MCF 10A (cell line): ENCODE measurements at regions of chr7 and their contacts with region 1.

Region 1: GRCh38 chr7:155729834-155730233 is 82.4 kb downstream of the SHH start:
- DNase-seq: peak; percentile 50
- H3K4me3 Mint-ChIP-seq: no peak overlapping the region
- H3K27ac Mint-ChIP-seq: peak overlapping the region; percentile 75
- H3K4me1 Mint-ChIP-seq: peaks cover 22% of the 10 kb centered on the region
- H3K27me3 Mint-ChIP-seq: no peaks in the 10 kb centered on the region
- CTCF ChIP-seq: no peak

Region 2: DNA sequence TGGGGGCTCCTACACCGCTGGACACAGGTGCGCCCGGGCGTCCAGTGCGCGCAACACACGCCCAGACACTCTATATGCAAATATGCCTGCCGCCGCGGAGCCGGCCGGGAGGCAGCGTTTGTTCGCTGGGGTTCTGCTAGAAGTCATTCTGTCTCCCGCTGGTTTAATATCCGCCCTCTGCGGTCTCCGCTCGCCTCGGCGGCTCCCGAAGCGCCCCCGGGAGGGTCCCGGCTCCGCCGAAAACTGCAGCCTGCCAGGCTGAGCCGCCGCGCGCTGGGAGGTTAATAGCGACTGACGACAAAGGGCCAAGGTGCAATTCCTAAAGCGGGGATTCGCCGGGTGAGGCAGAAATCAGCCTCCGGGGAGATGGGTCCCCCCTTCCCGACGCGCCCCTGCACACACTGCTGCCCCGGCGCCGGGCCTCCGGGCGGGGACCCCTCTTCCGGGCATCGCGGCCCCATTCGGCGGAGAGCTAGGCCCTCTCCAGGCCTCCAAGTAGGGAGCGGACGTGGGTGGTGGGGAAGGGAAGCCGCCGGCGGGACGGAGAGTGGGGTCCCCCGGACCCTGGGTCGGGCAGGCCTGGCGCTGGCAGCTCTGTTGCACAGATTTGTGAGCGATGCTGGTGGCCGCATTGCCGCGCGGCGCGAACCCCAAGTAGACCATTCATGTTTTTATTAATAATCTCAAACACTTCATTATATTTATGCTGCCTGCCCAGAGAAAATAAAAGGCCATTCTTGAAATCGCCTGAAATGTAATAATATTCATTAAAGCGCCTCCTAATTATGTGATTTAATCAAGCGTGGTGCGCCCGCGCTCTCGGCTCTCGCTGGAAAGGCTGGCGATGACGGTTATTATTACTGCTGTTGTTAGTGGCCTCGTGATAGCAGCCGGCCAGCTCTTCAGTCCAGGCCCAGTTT is 262.8 kb before region 1 on chr7:
- CTCF ChIA-PET with region 1: no interaction called
- POLR2A ChIA-PET with region 1: no interaction called
- intact Hi-C with region 1: no loop called
- DNase-seq: no peak
- H3K4me3 Mint-ChIP-seq: no peak overlapping the region
- H3K27ac Mint-ChIP-seq: no peak overlapping the region
- H3K4me1 Mint-ChIP-seq: no peaks in the 10 kb centered on the region
- H3K27me3 Mint-ChIP-seq: peaks cover 49% of the 10 kb centered on the region
- CTCF ChIP-seq: no peak

Region 3: GRCh38 chr7:155644178-155644970 is 85.5 kb before region 1 on chr7 and contains the start of gene RBM33:
- CTCF ChIA-PET with region 1: no interaction called
- POLR2A ChIA-PET with region 1: interaction called, 10 read pairs
- intact Hi-C with region 1: loop called (anchors 2 kb)
- DNase-seq: peak; percentile 81
- H3K4me3 Mint-ChIP-seq: peak within 1 kb of the TSS; percentile 78
- H3K27ac Mint-ChIP-seq: peak within 1 kb of the TSS; percentile 93
- H3K4me1 Mint-ChIP-seq: peaks cover 20% of the 10 kb centered on the region
- H3K27me3 Mint-ChIP-seq: no peaks in the 10 kb centered on the region
- CTCF ChIP-seq: no peak
- total RNA-seq, gene RBM33: 80.5 and 81.9 TPM in 2 replicates

Region 4: DNA sequence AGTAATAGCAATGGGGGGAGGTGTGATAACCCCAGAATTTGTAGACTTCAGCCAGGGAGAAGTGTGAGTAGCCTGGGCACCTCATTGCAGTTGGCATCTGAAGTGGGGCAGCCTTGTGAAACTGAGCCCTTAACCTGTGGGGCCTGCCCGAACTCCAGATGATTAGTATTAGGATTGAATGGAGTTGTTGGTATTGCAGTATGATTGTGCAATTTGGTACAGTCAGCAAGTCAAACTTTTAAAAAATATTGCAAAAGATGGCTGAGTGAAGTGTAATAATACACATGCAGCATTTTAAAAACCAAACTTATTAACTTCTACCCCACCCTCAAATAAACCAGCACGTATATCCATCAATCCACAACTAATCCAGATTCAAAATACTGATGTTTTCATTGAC is 76.0 kb before region 1 on chr7:
- CTCF ChIA-PET with region 1: no interaction called
- POLR2A ChIA-PET with region 1: no interaction called
- intact Hi-C with region 1: loop called (anchors 2 kb)
- DNase-seq: peak; percentile 87
- H3K4me3 Mint-ChIP-seq: no peak overlapping the region
- H3K27ac Mint-ChIP-seq: peak overlapping the region; percentile 50
- H3K4me1 Mint-ChIP-seq: peaks cover 30% of the 10 kb centered on the region
- H3K27me3 Mint-ChIP-seq: no peaks in the 10 kb centered on the region
- CTCF ChIP-seq: no peak

Region 5: DNA sequence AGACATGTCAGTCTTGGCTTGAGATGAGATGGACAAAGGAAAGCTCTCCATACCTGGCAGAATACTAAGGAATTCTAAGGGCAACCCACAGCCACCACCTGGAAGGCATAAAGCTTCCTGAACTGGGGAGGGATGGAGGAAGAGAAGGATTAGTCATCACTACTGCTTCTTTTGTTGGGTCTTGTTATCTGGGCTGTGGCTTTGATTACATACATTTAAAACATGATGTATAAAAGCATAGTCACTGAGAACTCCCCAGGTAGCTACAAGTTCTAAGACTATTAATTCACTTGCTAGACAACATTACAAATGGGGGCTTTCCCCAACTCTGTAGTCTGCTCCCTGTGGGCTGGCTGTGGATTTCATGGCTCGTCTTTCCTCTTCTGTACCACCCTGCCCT is 27.2 kb before region 1 on chr7:
- CTCF ChIA-PET with region 1: interaction called, 10 read pairs
- POLR2A ChIA-PET with region 1: interaction called, 4 read pairs
- intact Hi-C with region 1: no loop called
- DNase-seq: peak; percentile 57
- H3K4me3 Mint-ChIP-seq: no peak overlapping the region
- H3K27ac Mint-ChIP-seq: no peak overlapping the region
- H3K4me1 Mint-ChIP-seq: peaks cover 11% of the 10 kb centered on the region
- H3K27me3 Mint-ChIP-seq: no peaks in the 10 kb centered on the region
- CTCF ChIP-seq: no peak

Region 6: DNA sequence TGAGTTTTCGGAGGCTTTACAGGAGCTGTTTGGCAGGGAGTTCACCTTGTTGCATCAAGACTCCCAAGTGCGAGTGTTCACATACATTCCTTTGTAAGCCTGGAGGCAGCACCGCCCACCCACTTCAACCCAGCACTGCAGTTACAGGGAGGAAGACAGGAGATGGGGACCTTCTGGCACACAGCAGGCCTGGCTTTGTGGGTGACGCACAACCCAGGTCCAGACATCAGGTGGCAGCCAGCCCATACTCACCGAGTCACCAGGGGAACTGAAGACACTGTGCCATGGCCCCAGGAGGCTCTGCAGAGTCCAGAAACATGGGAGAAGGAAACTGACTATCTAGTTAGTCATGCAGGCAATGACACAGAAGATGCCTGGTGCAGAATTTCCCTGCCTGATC is 604.8 kb after region 1 on chr7:
- CTCF ChIA-PET with region 1: no interaction called
- POLR2A ChIA-PET with region 1: no interaction called
- intact Hi-C with region 1: no loop called
- DNase-seq: peak; percentile 72
- H3K4me3 Mint-ChIP-seq: no peak overlapping the region
- H3K27ac Mint-ChIP-seq: no peak overlapping the region
- H3K4me1 Mint-ChIP-seq: no peaks in the 10 kb centered on the region
- H3K27me3 Mint-ChIP-seq: peaks cover 10% of the 10 kb centered on the region
- CTCF ChIP-seq: no peak